ENCODE measurements at regions of chr13 and their contacts with region 1.

Region 1: DNA sequence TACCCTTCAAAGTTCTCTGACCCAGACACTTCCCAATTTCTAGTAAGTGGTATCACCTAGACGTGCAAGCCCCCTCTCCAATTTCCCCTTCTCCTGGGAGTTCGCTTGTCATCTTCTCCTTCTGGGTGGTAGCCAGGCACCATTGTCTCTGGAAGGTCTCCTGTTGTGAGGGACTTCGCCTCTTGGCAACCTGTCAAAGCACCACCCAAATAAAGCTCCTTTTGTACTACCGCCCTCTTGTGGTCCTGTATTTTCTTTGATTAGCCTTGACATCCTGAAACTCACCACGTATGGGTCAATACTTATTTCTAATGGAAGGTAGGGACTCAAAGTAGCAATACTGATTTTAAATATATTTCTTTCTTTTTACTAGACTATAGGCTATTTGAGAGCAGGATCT is 8.2 kb downstream of the GPC5 start:
- DNase-seq: no peak
- ATAC-seq: peak; percentile 92
- H3K4me3 ChIP-seq: no peak overlapping the region
- H3K27ac ChIP-seq: no peak overlapping the region
- H3K4me1 ChIP-seq: peaks cover 3% of the 10 kb centered on the region; the same call in 1 of the 2 replicates
- H3K27me3 ChIP-seq: no peaks in the 10 kb centered on the region
- CTCF ChIP-seq: peak; percentile 60 to 68 (median 67); a peak in 5 of 6 replicates
- EP300 ChIP-seq: no peak
- POLR2A ChIP-seq: no peak
- RAD21 ChIP-seq: peak; percentile 77

Region 2: DNA sequence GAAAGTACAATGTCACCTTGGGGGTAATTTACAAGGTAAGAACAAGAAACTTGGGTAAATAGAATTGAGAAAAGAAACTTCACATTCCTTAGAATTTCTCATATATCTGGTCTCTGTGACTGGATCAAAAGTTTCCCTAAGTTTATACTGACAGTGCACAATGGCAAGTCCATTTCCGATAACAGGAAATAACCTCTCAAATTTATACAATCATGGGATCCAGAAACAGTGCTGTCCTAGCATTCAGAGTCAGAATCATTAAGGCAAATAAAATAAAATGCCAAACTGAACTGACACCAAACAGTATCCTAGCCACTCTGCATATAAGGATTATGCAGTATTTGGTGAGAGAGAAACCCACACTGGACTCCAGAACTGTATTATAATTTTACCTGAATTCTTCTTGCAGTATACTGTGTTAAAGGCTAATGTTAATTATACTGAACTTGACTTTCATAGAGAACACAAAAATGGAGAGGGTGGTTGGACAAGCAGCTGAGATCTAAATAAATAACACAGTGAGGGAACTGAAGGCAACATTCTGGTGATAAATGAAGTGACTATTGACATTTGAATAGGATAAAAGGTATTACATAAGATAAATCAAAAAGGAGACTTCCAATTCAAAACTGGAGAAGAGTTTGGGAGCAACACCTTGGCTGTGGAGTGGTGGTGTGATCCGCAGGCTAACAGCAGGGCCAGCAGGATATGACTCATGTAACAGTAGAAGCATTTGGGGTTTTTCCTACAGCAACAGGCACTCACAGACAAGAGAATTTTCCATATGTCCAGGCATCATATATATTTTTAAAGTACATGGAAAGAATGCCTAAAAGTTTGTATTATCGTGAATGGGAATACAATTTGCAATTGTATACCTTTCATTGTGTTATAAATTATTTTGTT is 991.7 kb before region 1 on chr13:
- CTCF ChIA-PET with region 1: no interaction called
- POLR2A ChIA-PET with region 1: no interaction called
- RAD21 ChIA-PET with region 1: no interaction called
- SMC1A ChIA-PET with region 1: no interaction called
- in situ Hi-C with region 1: no loop called
- intact Hi-C with region 1: no loop called
- DNase-seq: no peak
- ATAC-seq: no peak
- H3K4me3 ChIP-seq: no peak overlapping the region
- H3K27ac ChIP-seq: no peak overlapping the region
- H3K4me1 ChIP-seq: no peaks in the 10 kb centered on the region
- H3K27me3 ChIP-seq: no peaks in the 10 kb centered on the region; a peak in 1 of 4 replicates
- CTCF ChIP-seq: no peak
- EP300 ChIP-seq: no peak
- POLR2A ChIP-seq: no peak
- RAD21 ChIP-seq: no peak

Region 3: DNA sequence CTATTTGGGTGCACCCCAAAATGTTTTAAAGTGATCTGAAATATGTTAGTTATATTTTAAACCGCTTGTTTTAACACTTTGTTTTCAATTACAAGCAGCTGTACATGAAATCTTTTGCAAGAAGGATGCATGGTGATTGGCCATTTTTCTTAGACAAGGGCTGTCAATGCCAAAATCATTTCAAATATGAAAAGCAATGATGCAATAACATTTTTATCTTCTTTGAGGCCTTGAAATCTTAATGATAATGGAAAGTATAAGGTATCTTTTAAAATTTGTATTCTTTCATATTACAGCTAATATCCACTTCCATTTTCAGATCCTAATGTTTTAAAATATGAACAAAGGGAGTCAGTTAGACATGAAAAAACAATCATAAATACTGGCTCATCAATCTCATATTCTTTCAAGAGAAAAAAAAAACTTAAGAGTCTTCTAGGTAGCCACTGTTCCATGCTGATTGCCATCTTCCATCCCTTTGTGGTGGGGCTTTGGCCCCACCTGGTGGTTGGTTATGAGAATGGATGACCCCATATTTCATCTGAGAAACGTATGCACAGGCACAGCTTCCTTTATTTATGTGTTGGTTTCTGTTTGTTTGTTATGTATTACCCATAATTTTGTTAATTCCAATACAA is 389.5 kb before region 1 on chr13:
- CTCF ChIA-PET with region 1: no interaction called
- POLR2A ChIA-PET with region 1: no interaction called
- RAD21 ChIA-PET with region 1: no interaction called
- SMC1A ChIA-PET with region 1: no interaction called
- in situ Hi-C with region 1: no loop called
- intact Hi-C with region 1: no loop called
- DNase-seq: peak; percentile 9
- ATAC-seq: peak; percentile 99
- H3K4me3 ChIP-seq: no peak overlapping the region
- H3K27ac ChIP-seq: no peak overlapping the region
- H3K4me1 ChIP-seq: no peaks in the 10 kb centered on the region
- H3K27me3 ChIP-seq: no peaks in the 10 kb centered on the region
- CTCF ChIP-seq: peak; percentile 73 to 75 (median 74); a peak in 5 of 6 replicates
- EP300 ChIP-seq: no peak
- POLR2A ChIP-seq: no peak
- RAD21 ChIP-seq: peak; percentile 84

Region 4: GRCh38 chr13:91381371-91381770 is 25.2 kb before region 1 on chr13:
- CTCF ChIA-PET with region 1: interaction called, 69 read pairs
- POLR2A ChIA-PET with region 1: no interaction called
- RAD21 ChIA-PET with region 1: interaction called, 28 read pairs
- SMC1A ChIA-PET with region 1: interaction called, 38 read pairs
- in situ Hi-C with region 1: no loop called
- intact Hi-C with region 1: loop called (anchors 1 kb)
- DNase-seq: no peak
- ATAC-seq: peak; percentile 42; the same call in 1 of the 3 replicates
- H3K4me3 ChIP-seq: no peak overlapping the region
- H3K27ac ChIP-seq: no peak overlapping the region
- H3K4me1 ChIP-seq: no peaks in the 10 kb centered on the region
- H3K27me3 ChIP-seq: no peaks in the 10 kb centered on the region
- CTCF ChIP-seq: peak; percentile 34 to 53 (median 52); a peak in 5 of 6 replicates
- EP300 ChIP-seq: no peak
- POLR2A ChIP-seq: no peak
- RAD21 ChIP-seq: peak; percentile 62

Region 5: DNA sequence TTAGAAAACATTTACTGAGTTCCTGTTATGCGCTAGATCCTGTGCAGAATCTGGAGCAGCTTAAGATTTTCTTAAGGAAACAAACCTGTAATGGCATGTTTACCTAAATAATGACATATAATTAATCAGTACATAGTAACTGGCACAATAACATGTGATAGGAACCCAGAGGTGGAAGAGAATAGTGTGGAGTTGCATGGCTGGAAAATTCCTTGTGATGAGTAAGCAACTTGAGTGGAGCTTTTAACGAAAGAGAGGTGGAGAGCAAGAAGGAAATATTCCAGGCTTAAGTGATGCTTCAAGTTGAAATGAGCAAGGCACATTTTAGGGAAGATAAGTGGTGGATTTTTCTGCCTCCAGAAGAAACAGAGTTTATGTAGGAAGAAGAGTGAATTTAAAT is 17.4 kb before region 1 on chr13:
- CTCF ChIA-PET with region 1: interaction called, 32 read pairs
- POLR2A ChIA-PET with region 1: no interaction called
- RAD21 ChIA-PET with region 1: interaction called, 4 read pairs
- SMC1A ChIA-PET with region 1: interaction called, 38 read pairs
- in situ Hi-C with region 1: no loop called
- intact Hi-C with region 1: no loop called
- DNase-seq: no peak
- ATAC-seq: no peak
- H3K4me3 ChIP-seq: no peak overlapping the region
- H3K27ac ChIP-seq: no peak overlapping the region
- H3K4me1 ChIP-seq: no peaks in the 10 kb centered on the region
- H3K27me3 ChIP-seq: no peaks in the 10 kb centered on the region
- CTCF ChIP-seq: no peak
- EP300 ChIP-seq: no peak
- POLR2A ChIP-seq: no peak
- RAD21 ChIP-seq: no peak

Region 6: DNA sequence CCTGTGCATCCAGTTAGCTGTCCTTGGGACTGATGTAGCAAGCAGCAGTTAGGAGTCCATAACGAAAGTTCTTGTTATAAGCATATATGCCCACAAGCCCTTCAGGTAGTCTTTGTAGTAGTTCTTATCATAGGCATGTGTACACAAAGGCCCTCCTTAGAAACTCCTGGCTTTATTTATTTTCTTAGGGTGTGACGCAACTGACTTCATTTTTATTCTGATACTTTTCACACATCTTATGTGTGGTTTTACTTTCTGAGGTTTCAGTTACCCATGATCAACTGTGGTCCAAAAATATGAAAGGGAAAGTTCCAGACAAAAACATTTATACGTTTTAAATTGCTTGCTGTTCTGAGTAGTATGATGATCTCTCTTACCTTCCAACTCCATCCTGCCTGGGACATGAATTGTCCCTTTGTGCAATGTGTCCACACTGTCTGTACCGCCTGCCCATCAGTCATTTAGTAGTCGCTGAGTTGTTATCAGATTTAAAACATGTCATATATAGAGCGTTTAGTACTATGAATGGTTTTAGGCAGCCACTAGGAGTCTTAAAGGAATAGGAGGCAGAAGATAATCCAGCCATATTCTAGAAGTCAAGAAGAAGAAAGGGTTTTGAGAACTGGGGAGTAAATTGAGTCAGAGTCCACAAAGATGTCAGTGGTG is 11.2 kb after region 1 on chr13:
- CTCF ChIA-PET with region 1: interaction called, 10 read pairs
- POLR2A ChIA-PET with region 1: no interaction called
- RAD21 ChIA-PET with region 1: no interaction called
- SMC1A ChIA-PET with region 1: interaction called, 5 read pairs
- in situ Hi-C with region 1: no loop called
- intact Hi-C with region 1: no loop called
- DNase-seq: no peak
- ATAC-seq: peak; percentile 58
- H3K4me3 ChIP-seq: no peak overlapping the region
- H3K27ac ChIP-seq: no peak overlapping the region
- H3K4me1 ChIP-seq: 0 out of 2 replicates have a peak, but pooled peaks cover 2% of the 10 kb centered on the region
- H3K27me3 ChIP-seq: no peaks in the 10 kb centered on the region
- CTCF ChIP-seq: no peak
- EP300 ChIP-seq: no peak
- POLR2A ChIP-seq: no peak
- RAD21 ChIP-seq: no peak

Measured in GM12878 (cell line).